PC-9 (cell line): ENCODE measurements at regions of chr3 and their contacts with region 1.

Region 1: DNA sequence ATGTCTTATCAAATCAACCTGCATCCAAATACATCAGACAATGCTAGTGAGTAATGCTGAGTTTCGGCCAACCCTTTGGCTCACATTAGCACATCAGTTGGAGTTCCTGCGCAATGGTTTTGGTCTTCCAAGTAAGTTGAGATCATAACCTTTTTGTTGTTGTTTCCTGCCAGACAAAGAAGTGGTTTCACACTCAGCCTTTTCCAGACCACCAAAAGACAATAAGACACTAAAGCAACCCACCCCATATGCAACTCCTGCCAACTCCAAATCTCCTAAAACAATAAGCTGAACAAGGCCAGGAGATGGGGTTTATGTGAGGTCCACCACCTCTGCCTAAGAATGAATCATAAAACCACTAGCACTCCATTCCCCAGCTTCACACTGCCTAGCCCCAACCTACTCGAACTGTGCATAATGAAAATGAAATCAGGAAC is 177.0 kb downstream of the ERC2 start:
- DNase-seq: no peak
- H3K4me3 ChIP-seq: no peak overlapping the region
- H3K27ac ChIP-seq: no peak overlapping the region
- H3K4me1 ChIP-seq: no peaks in the 10 kb centered on the region
- H3K27me3 ChIP-seq: peaks cover 35% of the 10 kb centered on the region
- CTCF ChIP-seq: no peak

Region 2: DNA sequence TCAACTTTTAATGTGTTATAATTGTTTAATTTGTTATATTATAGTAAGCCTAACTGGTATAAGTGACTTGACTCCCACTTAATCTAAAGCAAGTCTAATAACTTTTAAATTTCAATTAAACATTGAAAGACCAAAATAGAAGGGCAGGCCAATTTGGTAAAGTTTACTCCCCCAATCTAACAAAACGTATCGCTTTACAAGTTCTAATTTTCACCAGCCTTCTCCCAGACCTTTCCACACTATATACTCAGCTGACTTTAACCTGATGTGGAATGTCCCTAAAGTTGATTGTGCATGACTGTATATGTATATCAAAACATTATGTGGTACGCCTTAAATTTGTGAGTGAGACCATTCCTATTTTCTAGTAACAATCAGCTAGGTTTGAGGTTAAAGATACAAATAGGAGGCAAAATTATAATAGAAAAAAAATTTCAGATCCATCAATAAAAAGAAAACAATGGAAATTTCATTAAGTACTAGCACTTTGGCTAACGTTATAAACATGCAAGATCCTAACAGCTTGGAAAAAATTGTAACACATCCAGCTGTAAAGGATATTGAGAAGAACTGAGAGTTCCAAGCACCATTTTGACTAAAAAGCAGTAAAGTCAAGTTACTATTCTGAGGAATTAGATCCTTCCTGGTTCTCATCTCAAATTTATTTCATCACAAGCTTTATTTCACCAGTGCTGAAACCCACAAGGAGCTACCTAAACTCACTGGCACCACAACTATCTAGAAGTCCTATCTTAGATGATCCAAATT is 22.5 kb before region 1 on chr3:
- CTCF ChIA-PET with region 1: no interaction called
- POLR2A ChIA-PET with region 1: interaction called, 27 read pairs
- intact Hi-C with region 1: no loop called
- DNase-seq: no peak
- H3K4me3 ChIP-seq: no peak overlapping the region
- H3K27ac ChIP-seq: no peak overlapping the region
- H3K4me1 ChIP-seq: no peaks in the 10 kb centered on the region
- H3K27me3 ChIP-seq: peaks cover 19% of the 10 kb centered on the region; the same call in 1 of the 2 replicates
- CTCF ChIP-seq: no peak